ENCODE measurements at regions of chr12 and their contacts with region 1.

Region 1: DNA sequence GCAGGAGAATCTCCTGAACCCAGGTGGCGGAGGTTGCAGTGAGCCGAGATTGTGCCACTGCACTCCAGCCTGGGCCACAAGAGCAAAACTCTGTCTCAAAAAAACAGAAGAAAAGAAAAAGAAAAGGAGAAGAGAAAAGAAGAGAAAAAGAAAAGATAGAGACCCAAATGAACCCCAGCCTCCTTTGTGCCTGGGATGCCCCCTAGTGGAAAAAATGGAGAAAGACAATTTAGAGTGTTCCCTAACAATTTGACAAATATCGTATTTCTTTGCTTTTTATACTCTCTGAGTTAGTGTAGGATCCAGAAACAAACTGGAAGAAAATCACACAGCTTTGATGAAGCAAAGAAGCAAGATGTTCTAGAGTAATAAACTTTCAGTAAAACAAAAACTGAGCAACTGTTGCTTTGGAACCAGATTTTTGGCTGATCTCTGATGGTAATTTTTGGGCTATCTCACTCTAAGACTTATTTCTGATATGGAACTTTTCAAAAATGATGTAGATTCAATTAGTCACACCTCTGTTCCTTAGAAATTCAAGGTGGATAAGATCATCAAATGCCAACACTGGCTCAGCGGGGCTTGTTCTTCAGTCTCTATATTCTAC is 18.6 kb upstream of the PRKAB1 start:
- DNase-seq: no peak
- H3K4me3 Mint-ChIP-seq: no peak overlapping the region
- H3K27ac Mint-ChIP-seq: no peak overlapping the region
- H3K4me1 Mint-ChIP-seq: no peaks in the 10 kb centered on the region
- H3K27me3 Mint-ChIP-seq: peaks cover 11% of the 10 kb centered on the region

Region 2: GRCh38 chr12:119665164-119665929 is 16.0 kb after region 1 on chr12:
- CTCF ChIA-PET with region 1: interaction called, 11 read pairs
- DNase-seq: no peak
- H3K4me3 Mint-ChIP-seq: no peak overlapping the region
- H3K27ac Mint-ChIP-seq: no peak overlapping the region
- H3K4me1 Mint-ChIP-seq: peaks cover 39% of the 10 kb centered on the region
- H3K27me3 Mint-ChIP-seq: peaks cover 10% of the 10 kb centered on the region

Measured in activated naive CD4-positive, alpha-beta T cell treated with anti-CD3 and anti-CD28 coated beads, Interleukin-2, amount 10 ng/mL, durations not matched to agents 7 days and 5 days (primary cell).